GM12878 (cell line): ENCODE measurements at regions of chr1 and their contacts with region 1.

Region 1: GRCh38 chr1:44631647-44632539 is 42.4 kb downstream of the TMEM53 start:
- DNase-seq: peak; percentile 37
- ATAC-seq: peak; percentile 86
- H3K4me3 ChIP-seq: peak overlapping the region; percentile 98
- H3K27ac ChIP-seq: peak overlapping the region; percentile 94
- H3K4me1 ChIP-seq: no peaks in the 10 kb centered on the region
- H3K27me3 ChIP-seq: no peaks in the 10 kb centered on the region
- CTCF ChIP-seq: no peak
- EP300 ChIP-seq: no peak
- POLR2A ChIP-seq: peak; percentile 91
- RAD21 ChIP-seq: no peak

Region 2: DNA sequence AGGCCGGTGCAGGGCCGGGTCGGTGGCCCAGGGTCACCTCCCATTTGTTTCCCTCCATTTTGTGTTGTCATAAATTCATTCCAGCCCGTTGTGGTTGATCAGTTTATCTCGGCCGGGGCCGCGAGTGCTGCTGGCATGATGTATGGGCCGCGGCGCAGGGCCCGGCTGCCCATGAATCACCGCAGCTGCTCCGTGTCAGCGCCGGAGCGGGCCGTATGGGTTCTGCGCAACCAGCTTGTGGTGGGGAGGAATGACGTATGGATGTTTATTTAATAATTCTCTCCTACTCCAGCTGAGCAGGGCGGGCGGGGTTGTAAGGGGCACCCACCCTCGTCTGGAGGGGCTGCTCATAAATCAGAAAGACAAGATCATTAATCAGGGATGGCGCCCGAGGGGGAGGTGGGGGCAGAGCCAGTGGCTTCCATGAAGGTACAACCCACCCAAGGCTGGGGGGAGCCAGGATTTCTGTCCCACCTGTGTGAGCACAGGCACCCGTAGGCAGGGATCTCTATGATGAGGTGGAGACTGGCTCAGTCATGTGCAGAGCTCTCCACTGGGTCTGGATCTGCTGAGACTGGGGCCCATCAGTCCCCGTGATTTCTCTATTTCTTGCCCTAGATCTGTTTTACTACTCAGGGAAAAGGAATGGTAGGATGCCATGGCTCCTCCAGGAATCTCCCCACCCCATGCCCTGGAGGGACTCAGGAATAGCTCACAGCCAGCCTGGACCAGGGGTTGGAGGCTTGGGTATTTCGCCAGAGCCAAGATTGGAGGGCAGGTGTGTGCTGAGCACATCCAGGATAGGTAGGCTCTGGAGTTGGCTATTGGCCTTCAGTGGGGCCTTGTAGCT is 14.6 kb after region 1 on chr1:
- CTCF ChIA-PET with region 1: interaction called, 70 read pairs
- POLR2A ChIA-PET with region 1: interaction called, 5 read pairs
- RAD21 ChIA-PET with region 1: no interaction called
- SMC1A ChIA-PET with region 1: interaction called, 18 read pairs
- in situ Hi-C with region 1: no loop called
- intact Hi-C with region 1: no loop called
- DNase-seq: no peak
- ATAC-seq: no peak
- H3K4me3 ChIP-seq: no peak overlapping the region
- H3K27ac ChIP-seq: no peak overlapping the region
- H3K4me1 ChIP-seq: no peaks in the 10 kb centered on the region
- H3K27me3 ChIP-seq: no peaks in the 10 kb centered on the region
- CTCF ChIP-seq: no peak
- EP300 ChIP-seq: no peak
- POLR2A ChIP-seq: no peak
- RAD21 ChIP-seq: no peak